ENCODE measurements at regions of chr3 and their contacts with region 1.

Region 1: DNA sequence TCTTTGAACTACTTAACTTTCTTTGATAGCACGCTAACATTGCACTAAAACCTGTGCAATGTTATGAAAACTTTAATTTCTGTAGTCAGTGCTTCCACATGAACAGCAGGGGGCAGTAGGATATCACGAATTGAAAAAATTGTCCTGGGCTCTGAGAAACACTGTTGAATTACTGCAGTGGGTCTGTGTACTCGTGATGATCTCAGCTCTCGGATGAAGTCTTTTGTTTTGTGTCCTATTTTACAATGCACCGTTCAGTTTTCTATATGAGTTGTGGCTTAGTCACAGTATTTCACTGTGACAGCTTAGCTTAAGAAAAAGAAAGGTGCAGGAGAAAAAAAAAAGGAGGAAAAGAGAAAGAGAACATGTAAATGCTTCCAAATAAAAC is 141.3 kb upstream of the CCDC54 start:
- DNase-seq: peak; percentile 86
- H3K4me3 ChIP-seq: peak overlapping the region; percentile 37 to 69 (median 57)
- H3K27ac ChIP-seq: peak overlapping the region; percentile 77
- H3K4me1 ChIP-seq: peaks cover 17% of the 10 kb centered on the region
- H3K27me3 ChIP-seq: no peaks in the 10 kb centered on the region
- CTCF ChIP-seq: peak; percentile 81 to 86

Region 2: DNA sequence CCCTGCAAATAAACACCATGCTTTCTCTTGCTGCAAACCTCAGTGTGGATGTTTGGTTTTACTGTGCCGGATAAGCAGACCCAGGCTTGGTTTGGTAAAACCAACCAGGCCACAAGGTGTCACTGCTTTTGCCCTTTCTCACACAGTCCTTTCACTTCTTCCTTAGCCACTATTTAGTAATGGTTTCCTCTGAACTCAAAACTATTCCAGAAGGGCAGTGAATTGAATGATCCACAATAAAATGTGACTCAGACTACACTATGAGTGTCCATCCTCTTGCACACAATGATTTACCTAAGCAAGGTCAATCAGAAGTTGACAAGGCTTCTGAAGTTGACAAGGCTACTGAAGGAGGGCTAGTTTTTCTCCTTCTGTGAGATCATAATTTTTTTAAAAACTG is 411.1 kb before region 1 on chr3:
- CTCF ChIA-PET with region 1: no interaction called
- dilution Hi-C with region 1: no loop called
- in situ Hi-C with region 1: no loop called
- intact Hi-C with region 1: no loop called
- DNase-seq: peak; percentile 49
- H3K4me3 ChIP-seq: no peak overlapping the region
- H3K27ac ChIP-seq: no peak overlapping the region
- H3K4me1 ChIP-seq: peaks cover 6% of the 10 kb centered on the region
- H3K27me3 ChIP-seq: no peaks in the 10 kb centered on the region
- CTCF ChIP-seq: peak in 1 of 2 donors; percentile 42

Region 3: GRCh38 chr3:107271787-107272387 is 36.0 kb after region 1 on chr3:
- CTCF ChIA-PET with region 1: no interaction called
- dilution Hi-C with region 1: no loop called
- in situ Hi-C with region 1: no loop called
- intact Hi-C with region 1: loop called (anchors 1 kb)
- DNase-seq: peak; percentile 35
- H3K4me3 ChIP-seq: no peak overlapping the region
- H3K27ac ChIP-seq: no peak overlapping the region
- H3K4me1 ChIP-seq: no peaks in the 10 kb centered on the region
- H3K27me3 ChIP-seq: no peaks in the 10 kb centered on the region
- CTCF ChIP-seq: peak; percentile 64 to 69

Region 4: GRCh38 chr3:107429320-107430181 is 193.6 kb after region 1 on chr3:
- CTCF ChIA-PET with region 1: interaction called, 4 read pairs
- dilution Hi-C with region 1: no loop called
- in situ Hi-C with region 1: no loop called
- intact Hi-C with region 1: loop called (anchors 1 kb)
- DNase-seq: peak; percentile 75
- H3K4me3 ChIP-seq: peak overlapping the region; percentile 38 to 44 (median 38)
- H3K27ac ChIP-seq: no peak overlapping the region
- H3K4me1 ChIP-seq: peaks cover 32% of the 10 kb centered on the region
- H3K27me3 ChIP-seq: no peaks in the 10 kb centered on the region
- CTCF ChIP-seq: peak; percentile 63 to 91

Region 5: GRCh38 chr3:107543666-107544065 is 307.7 kb after region 1 on chr3:
- CTCF ChIA-PET with region 1: no interaction called
- dilution Hi-C with region 1: no loop called
- in situ Hi-C with region 1: no loop called
- intact Hi-C with region 1: loop called (anchors 1 kb)
- DNase-seq: no peak
- H3K4me3 ChIP-seq: no peak overlapping the region
- H3K27ac ChIP-seq: no peak overlapping the region
- H3K4me1 ChIP-seq: no peaks in the 10 kb centered on the region
- H3K27me3 ChIP-seq: no peaks in the 10 kb centered on the region
- CTCF ChIP-seq: peak; percentile 27 to 30

Region 6: DNA sequence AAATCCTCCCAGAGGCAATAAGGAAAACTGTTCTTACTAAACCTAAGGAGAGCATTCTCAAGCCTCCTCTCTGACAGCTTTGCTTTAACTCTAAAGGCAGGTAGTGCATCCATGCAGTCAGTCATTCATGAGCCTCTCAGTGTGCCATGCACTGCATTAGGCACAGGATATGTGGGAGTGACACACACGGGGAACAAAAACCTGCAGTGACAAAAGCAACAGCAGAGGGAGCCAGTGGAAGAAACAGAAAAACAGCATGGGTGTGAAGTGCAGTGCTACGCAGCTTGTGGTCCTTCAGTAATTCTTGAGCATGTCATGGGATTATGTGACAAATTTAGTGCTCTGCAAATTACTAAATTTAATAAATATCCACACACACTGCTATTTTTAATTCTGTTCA is 517.6 kb after region 1 on chr3:
- CTCF ChIA-PET with region 1: no interaction called
- dilution Hi-C with region 1: no loop called
- in situ Hi-C with region 1: no loop called
- intact Hi-C with region 1: loop called (anchors 2 kb)
- DNase-seq: peak; percentile 39
- H3K4me3 ChIP-seq: no peak overlapping the region
- H3K27ac ChIP-seq: no peak overlapping the region
- H3K4me1 ChIP-seq: no peaks in the 10 kb centered on the region
- H3K27me3 ChIP-seq: no peaks in the 10 kb centered on the region
- CTCF ChIP-seq: peak in 1 of 2 donors; percentile 62

Region 7: GRCh38 chr3:107927361-107928083 is 691.6 kb after region 1 on chr3:
- CTCF ChIA-PET with region 1: no interaction called
- dilution Hi-C with region 1: no loop called
- in situ Hi-C with region 1: no loop called
- intact Hi-C with region 1: loop called (anchors 1 kb)
- DNase-seq: peak; percentile 69
- H3K4me3 ChIP-seq: peak overlapping the region; percentile 47 to 67 (median 52)
- H3K27ac ChIP-seq: no peak overlapping the region
- H3K4me1 ChIP-seq: no peaks in the 10 kb centered on the region
- H3K27me3 ChIP-seq: peaks cover 2% of the 10 kb centered on the region
- CTCF ChIP-seq: peak; percentile 78 to 96

Region 8: DNA sequence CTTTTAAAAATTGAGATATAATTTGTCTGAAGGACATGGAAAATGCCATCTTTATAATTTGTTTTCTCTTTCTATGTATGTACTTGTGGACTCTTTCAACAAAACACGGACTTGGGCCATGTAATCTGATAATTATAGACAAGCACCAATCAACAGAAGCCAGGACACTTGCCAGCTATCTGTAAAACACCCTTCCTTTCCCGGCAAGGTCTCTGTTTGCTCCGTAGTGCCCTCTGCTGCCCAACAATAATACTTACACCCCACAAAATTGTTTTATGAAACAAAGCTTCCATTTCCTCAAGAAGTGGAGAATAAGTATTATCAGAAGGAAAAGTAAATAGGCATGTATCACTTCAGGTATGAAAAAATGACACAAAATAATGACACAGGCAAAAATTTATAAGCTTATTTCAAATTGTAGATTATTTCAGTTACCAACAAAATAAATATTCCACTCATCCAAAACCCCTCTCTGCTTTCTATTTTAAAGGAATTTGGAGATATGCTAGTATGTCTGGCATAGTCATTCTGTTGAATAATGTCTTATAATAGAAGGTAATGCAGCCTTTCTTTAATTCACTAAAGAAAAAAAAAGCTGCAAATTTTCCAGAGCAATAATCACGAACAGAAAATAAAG is 1241.7 kb after region 1 on chr3:
- CTCF ChIA-PET with region 1: no interaction called
- dilution Hi-C with region 1: no loop called
- in situ Hi-C with region 1: no loop called
- intact Hi-C with region 1: loop called (anchors 10 kb)
- DNase-seq: peak; percentile 48
- H3K4me3 ChIP-seq: no peak overlapping the region
- H3K27ac ChIP-seq: no peak overlapping the region
- H3K4me1 ChIP-seq: peaks cover 2% of the 10 kb centered on the region
- H3K27me3 ChIP-seq: no peaks in the 10 kb centered on the region
- CTCF ChIP-seq: peak; percentile 73 to 75